Heart right ventricle (tissue), 16 donors: ENCODE measurements at regions of chr5 and their contacts with region 1.

Region 1: GRCh38 chr5:14871210-14872069 is at the start of gene ANKH:
- DNase-seq: peak; percentile 78 to 85
- ATAC-seq: peak; percentile 76 to 93 (median 86)
- H3K4me3 ChIP-seq: peak within 1 kb of the TSS; percentile 79 to 98 (median 88)
- H3K27ac ChIP-seq: peak within 1 kb of the TSS; percentile 96 to 100 (median 98)
- H3K4me1 ChIP-seq: peaks cover 0 to 46% (median 25%) of the 10 kb centered on the region in 9 donors
- H3K27me3 ChIP-seq: no peaks in the 10 kb centered on the region
- CTCF ChIP-seq: peak in 3 of 9 donors; percentile 17 to 45 (median 38)
- total RNA-seq, gene ANKH: 155 to 256 (median 215) TPM

Region 2: DNA sequence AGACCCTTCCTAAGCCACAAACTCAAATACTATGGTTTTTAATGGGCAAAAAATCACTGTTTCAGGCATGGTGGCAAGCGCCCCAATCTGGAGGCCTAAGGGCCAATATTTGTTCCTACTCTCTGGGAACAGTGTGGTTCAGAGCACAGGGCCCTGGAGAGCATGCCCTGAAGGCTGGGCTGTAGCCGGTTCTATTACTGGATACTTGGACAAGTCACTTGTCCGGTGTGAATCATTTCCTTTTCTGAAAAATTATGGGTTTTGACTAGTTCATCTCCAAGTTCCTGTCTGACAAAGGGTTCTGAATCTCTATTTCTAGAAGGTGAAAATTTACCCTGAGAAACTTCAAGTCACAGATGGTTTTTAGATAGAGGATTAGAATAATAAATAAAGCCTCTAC is 131.9 kb before region 1 on chr5:
- intact Hi-C with region 1: loop called in 2 of 10 experiments (anchors 10 kb)
- DNase-seq: no peak
- ATAC-seq: peak in 6 of 8 donors; percentile 46 to 68 (median 58)
- H3K4me3 ChIP-seq: no peak overlapping the region
- H3K27ac ChIP-seq: peak overlapping the region; percentile 4 to 68 (median 48)
- H3K4me1 ChIP-seq: peaks cover 10 to 72% (median 33%) of the 10 kb centered on the region in 9 donors
- H3K27me3 ChIP-seq: no peaks in the 10 kb centered on the region
- CTCF ChIP-seq: no peak

Region 3: GRCh38 chr5:14809369-14810155 is 61.9 kb before region 1 on chr5:
- intact Hi-C with region 1: loop called in 1 of 10 experiments (anchors 5 kb)
- DNase-seq: peak; percentile 34 to 66
- ATAC-seq: peak; percentile 63 to 84 (median 70)
- H3K4me3 ChIP-seq: peak overlapping the region in 3 of 10 donors; percentile 1 to 27 (median 6)
- H3K27ac ChIP-seq: peak overlapping the region in 8 of 10 donors; percentile 44 to 94 (median 70)
- H3K4me1 ChIP-seq: peaks cover 7 to 72% (median 53%) of the 10 kb centered on the region in 9 donors
- H3K27me3 ChIP-seq: no peaks in the 10 kb centered on the region
- CTCF ChIP-seq: no peak

Region 4: GRCh38 chr5:14937254-14937653 is 65.8 kb after region 1 on chr5:
- intact Hi-C with region 1: loop called in 2 of 10 experiments (anchors 10 kb)
- DNase-seq: no peak
- ATAC-seq: peak in 7 of 8 donors; percentile 61 to 88 (median 71)
- H3K4me3 ChIP-seq: no peak overlapping the region
- H3K27ac ChIP-seq: peak overlapping the region in 7 of 10 donors; percentile 14 to 69 (median 36)
- H3K4me1 ChIP-seq: peaks cover 0 to 30% (median 6%) of the 10 kb centered on the region in 9 donors
- H3K27me3 ChIP-seq: no peaks in the 10 kb centered on the region
- CTCF ChIP-seq: no peak

Region 5: DNA sequence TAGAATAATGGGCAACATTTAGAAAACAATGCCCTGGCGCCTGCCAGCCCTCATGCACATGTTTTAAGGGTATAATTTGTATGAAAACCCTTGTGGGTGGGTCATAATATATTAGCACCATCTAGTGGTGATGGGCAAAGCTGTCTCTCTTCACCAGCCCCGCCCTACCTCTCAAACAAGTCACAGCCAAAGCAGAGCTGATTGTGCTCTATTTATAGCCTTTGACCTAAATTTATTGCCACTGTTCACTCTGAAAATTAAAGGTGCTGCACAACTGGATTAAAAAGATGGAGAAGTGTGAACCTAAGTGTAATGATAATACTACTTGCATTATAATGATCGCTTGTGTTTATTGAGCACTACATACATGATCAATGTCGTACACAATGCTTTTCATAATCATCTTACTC is 132.1 kb after region 1 on chr5:
- intact Hi-C with region 1: loop called in 8 of 10 experiments (anchors 1 to 10 kb)
- DNase-seq: peak; percentile 27 to 75
- ATAC-seq: peak; percentile 82 to 93 (median 88)
- H3K4me3 ChIP-seq: no peak overlapping the region
- H3K27ac ChIP-seq: no peak overlapping the region
- H3K4me1 ChIP-seq: peaks cover 4 to 52% (median 37%) of the 10 kb centered on the region in 9 donors
- H3K27me3 ChIP-seq: no peaks in the 10 kb centered on the region
- CTCF ChIP-seq: peak; percentile 62 to 94 (median 83)